ENCODE measurements at regions of chr2 and their contacts with region 1.

Region 1: DNA sequence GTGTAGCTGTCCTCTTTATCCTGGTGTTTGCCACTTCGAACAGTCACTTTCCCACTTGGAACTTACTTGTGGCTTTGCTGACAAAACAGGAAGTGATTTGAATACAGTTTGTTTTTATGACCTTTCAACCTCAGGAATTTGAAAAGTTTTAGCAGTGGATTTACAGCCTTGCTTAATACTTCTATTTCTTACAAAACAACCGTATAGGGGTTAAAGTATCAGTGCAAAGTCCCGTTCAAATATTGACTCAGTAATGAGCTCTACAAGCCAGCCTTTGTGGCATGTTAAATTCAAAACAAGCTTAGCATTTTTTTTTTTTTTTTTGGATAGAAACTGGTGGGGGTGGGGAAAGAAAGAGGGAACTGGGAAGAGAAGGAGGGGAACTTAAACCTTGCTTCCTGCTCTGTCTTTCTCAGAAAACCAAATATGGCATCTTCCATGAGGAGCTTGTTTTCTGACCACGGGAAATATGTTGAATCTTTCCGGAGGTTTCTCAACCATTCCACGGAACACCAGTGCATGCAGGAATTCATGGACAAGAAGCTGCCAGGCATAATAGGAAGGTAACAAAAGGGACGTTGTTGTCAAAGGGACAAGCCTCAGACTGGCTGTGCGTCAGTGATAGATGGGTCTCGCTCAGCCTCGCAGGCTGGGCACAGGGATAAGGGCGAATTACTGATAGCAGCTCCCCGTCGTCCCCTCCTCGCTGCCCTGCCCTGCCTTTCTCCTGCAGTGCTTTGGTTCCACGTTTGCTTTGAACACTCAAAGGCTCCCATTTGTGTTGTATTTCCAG is at the start of gene HNMT:
- DNase-seq: peak in 2 of 3 donors; percentile 62 to 73
- H3K4me3 ChIP-seq: peak within 1 kb of the TSS; percentile 88 to 100 (median 94)
- H3K4me3 Mint-ChIP-seq: peak within 1 kb of the TSS; percentile 84 to 98
- H3K27ac ChIP-seq: peak within 1 kb of the TSS; percentile 91 to 96
- H3K27ac Mint-ChIP-seq: peak within 1 kb of the TSS; percentile 91 to 98 (median 95)
- H3K4me1 ChIP-seq: peaks cover 69 to 82% of the 10 kb centered on the region in 2 donors
- H3K4me1 Mint-ChIP-seq: peaks cover 83% of the 10 kb centered on the region
- H3K27me3 ChIP-seq: no peaks in the 10 kb centered on the region
- H3K27me3 Mint-ChIP-seq: peaks cover 0 to 2% (median 0%) of the 10 kb centered on the region in 3 donors
- CTCF ChIP-seq: no peak
- polyA plus RNA-seq, gene HNMT: 83.0 to 118 (median 109) TPM

Region 2: GRCh38 chr2:137992039-137992646 is 27.9 kb after region 1 on chr2:
- intact Hi-C with region 1: no loop called
- DNase-seq: no peak
- H3K4me3 ChIP-seq: no peak overlapping the region
- H3K4me3 Mint-ChIP-seq: no peak overlapping the region
- H3K27ac ChIP-seq: no peak overlapping the region
- H3K27ac Mint-ChIP-seq: peak overlapping the region in 2 of 7 donors; percentile 26 to 57
- H3K4me1 ChIP-seq: no peaks in the 10 kb centered on the region
- H3K4me1 Mint-ChIP-seq: no peaks in the 10 kb centered on the region
- H3K27me3 ChIP-seq: no peaks in the 10 kb centered on the region
- H3K27me3 Mint-ChIP-seq: peaks cover 0 to 2% (median 0%) of the 10 kb centered on the region in 3 donors
- CTCF ChIP-seq: no peak

Region 3: DNA sequence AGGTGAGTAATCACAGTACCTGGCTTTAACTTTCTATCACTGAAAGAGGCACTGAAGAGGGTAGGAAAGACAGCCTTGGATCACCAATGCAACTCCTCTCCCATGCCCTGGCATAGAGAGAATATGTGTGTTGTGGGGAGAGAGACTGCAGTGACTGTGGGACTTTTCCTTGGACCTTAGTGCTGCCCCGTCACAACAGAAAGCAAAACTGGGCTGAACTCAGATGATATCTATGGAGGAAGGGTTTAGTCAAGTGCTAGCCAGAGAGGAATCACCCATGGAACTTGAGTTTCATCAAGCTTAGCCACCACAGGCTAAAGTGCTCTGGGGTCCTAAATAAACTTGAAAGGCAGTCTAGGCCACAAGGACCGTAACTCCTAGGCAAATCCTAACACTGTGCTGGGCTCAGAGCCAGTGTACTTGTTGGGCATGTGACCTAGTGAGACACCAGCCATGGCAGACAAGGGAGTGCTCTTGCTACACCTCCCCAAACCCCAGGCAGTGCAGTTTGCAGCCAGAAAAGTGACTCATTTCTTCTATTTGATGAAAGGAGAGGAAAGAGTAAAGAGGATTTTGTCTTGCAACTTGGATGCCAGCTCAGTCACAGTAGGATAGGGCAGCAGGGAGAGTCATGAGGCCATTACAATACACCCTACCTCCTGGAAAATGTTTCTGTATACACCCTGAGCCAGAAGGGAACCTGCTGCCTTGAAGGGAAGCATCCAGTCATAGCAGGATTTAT is 431.5 kb after region 1 on chr2:
- intact Hi-C with region 1: no loop called
- DNase-seq: no peak
- H3K4me3 ChIP-seq: no peak overlapping the region
- H3K4me3 Mint-ChIP-seq: no peak overlapping the region
- H3K27ac ChIP-seq: no peak overlapping the region
- H3K27ac Mint-ChIP-seq: no peak overlapping the region
- H3K4me1 ChIP-seq: no peaks in the 10 kb centered on the region
- H3K4me1 Mint-ChIP-seq: no peaks in the 10 kb centered on the region
- H3K27me3 ChIP-seq: no peaks in the 10 kb centered on the region
- H3K27me3 Mint-ChIP-seq: peaks cover 0 to 2% (median 0%) of the 10 kb centered on the region in 3 donors
- CTCF ChIP-seq: no peak

Region 4: GRCh38 chr2:138501425-138502283 is 537.4 kb after region 1 on chr2 and contains the start of gene SPOPL:
- intact Hi-C with region 1: loop called (anchors 5 to 10 kb)
- DNase-seq: peak; percentile 76 to 90 (median 89)
- H3K4me3 ChIP-seq: peak within 1 kb of the TSS; percentile 94 to 98 (median 95)
- H3K4me3 Mint-ChIP-seq: peak within 1 kb of the TSS; percentile 100
- H3K27ac ChIP-seq: peak within 1 kb of the TSS; percentile 89 to 92
- H3K27ac Mint-ChIP-seq: peak within 1 kb of the TSS; percentile 94 to 100 (median 98)
- H3K4me1 ChIP-seq: peaks cover 55 to 70% of the 10 kb centered on the region in 2 donors
- H3K4me1 Mint-ChIP-seq: peaks cover 56% of the 10 kb centered on the region
- H3K27me3 ChIP-seq: no peaks in the 10 kb centered on the region
- H3K27me3 Mint-ChIP-seq: peaks cover 0 to 2% (median 0%) of the 10 kb centered on the region in 3 donors
- CTCF ChIP-seq: peak; percentile 31
- polyA plus RNA-seq, gene SPOPL: 13.1 to 22.4 (median 18.1) TPM